Activated CD4-positive, alpha-beta memory T cell treated with anti-CD3 and anti-CD28 coated beads for 36 hours (primary cell): ENCODE measurements at regions of chr3 and their contacts with region 1.

Region 1: GRCh38 chr3:72800869-72801268 is 47.4 kb downstream of the SHQ1 start:
- DNase-seq: no peak
- H3K4me3 Mint-ChIP-seq: no peak overlapping the region
- H3K27ac Mint-ChIP-seq: no peak overlapping the region
- H3K4me1 Mint-ChIP-seq: peaks cover 25% of the 10 kb centered on the region
- H3K27me3 Mint-ChIP-seq: no peaks in the 10 kb centered on the region

Region 2: GRCh38 chr3:72722930-72723726 is 77.7 kb before region 1 on chr3:
- CTCF ChIA-PET with region 1: no interaction called
- POLR2A ChIA-PET with region 1: no interaction called
- intact Hi-C with region 1: loop called (anchors 1 kb)
- DNase-seq: peak; percentile 20
- H3K4me3 Mint-ChIP-seq: no peak overlapping the region
- H3K27ac Mint-ChIP-seq: peak overlapping the region; percentile 3
- H3K4me1 Mint-ChIP-seq: peaks cover 17% of the 10 kb centered on the region
- H3K27me3 Mint-ChIP-seq: no peaks in the 10 kb centered on the region

Region 3: DNA sequence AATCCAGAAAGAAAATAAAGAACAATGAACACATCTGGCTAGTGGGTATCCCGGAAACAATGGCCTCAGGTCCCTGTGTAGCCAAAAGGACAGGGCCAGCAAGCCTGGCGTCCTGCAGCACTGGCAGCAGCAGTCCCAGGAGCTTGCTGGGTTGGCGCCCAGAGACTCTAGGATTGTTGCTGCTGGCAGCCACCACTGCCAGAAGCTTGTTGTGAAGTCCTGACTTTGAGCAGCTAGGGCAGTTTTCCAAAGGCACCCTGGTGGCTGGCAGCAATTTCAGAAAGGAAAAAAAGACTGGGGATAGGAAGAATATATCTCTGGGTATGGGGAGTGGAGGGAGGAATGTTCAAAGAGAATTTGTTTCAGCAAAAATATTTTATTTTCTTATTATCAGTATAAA is 36.1 kb after region 1 on chr3:
- CTCF ChIA-PET with region 1: no interaction called
- POLR2A ChIA-PET with region 1: no interaction called
- intact Hi-C with region 1: no loop called
- DNase-seq: no peak
- H3K4me3 Mint-ChIP-seq: no peak overlapping the region
- H3K27ac Mint-ChIP-seq: no peak overlapping the region
- H3K4me1 Mint-ChIP-seq: no peaks in the 10 kb centered on the region
- H3K27me3 Mint-ChIP-seq: no peaks in the 10 kb centered on the region

Region 4: DNA sequence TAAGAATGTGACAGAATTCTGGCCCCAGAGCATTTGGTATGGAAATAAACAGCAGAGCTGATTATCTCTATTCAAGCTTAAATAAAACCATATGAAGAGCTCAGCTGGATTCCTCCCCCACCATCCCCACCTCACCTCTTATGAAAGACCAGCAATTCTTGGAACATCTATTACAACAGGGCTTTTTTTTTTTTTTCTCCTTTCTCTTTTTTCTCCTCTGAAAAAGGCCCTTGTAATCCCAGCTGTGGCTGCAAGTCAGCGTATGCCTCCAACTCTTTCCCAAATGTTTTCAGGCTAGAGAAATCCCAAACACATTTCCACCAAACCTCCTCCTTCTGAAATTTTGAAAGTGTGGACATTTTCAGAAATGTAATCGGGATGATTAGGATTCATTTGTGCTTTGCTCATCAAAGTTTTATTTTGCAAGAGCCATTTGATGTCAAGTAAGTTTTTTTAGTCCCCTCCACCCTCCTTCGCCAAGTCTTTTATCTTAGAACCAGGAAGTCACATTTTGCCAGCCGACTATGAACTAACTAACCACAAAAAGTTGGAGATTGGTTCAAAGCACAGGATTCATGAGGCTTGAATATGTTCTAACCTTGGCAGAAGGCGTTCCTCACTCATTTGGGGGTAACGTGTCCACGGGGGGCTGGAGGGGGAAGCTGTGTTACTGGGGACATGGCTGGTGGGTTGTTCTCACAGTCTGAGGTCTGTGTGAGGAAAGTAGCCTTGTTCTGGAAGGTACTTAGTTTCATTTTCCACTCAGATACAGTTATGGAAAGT is 965.9 kb after region 1 on chr3:
- CTCF ChIA-PET with region 1: no interaction called
- POLR2A ChIA-PET with region 1: no interaction called
- intact Hi-C with region 1: no loop called
- DNase-seq: no peak
- H3K4me3 Mint-ChIP-seq: no peak overlapping the region
- H3K27ac Mint-ChIP-seq: no peak overlapping the region
- H3K4me1 Mint-ChIP-seq: no peaks in the 10 kb centered on the region
- H3K27me3 Mint-ChIP-seq: no peaks in the 10 kb centered on the region